ENCODE measurements at regions of chr9 and their contacts with region 1.

Region 1: GRCh38 chr9:5593904-5594303 is 35.0 kb upstream of the RIC1 start:
- DNase-seq: peak; percentile 57 to 76 (median 66)
- H3K4me3 ChIP-seq: no peak overlapping the region
- H3K4me3 Mint-ChIP-seq: no peak overlapping the region
- H3K27ac ChIP-seq: peak overlapping the region in 1 of 2 donors; percentile 21
- H3K27ac Mint-ChIP-seq: peak overlapping the region in 5 of 7 donors; percentile 21 to 81 (median 52)
- H3K4me1 ChIP-seq: peaks cover 14 to 15% of the 10 kb centered on the region in 2 donors
- H3K4me1 Mint-ChIP-seq: peaks cover 27% of the 10 kb centered on the region
- H3K27me3 ChIP-seq: peaks cover 0 to 4% of the 10 kb centered on the region in 2 donors
- H3K27me3 Mint-ChIP-seq: peaks cover 0 to 8% (median 7%) of the 10 kb centered on the region in 3 donors
- CTCF ChIP-seq: no peak

Region 2: GRCh38 chr9:4750023-4750673 is 843.8 kb before region 1 on chr9:
- intact Hi-C with region 1: loop called in 1 of 2 experiments (anchors 10 kb)
- DNase-seq: peak in 2 of 3 donors; percentile 27 to 55
- H3K4me3 ChIP-seq: no peak overlapping the region
- H3K4me3 Mint-ChIP-seq: no peak overlapping the region
- H3K27ac ChIP-seq: no peak overlapping the region
- H3K27ac Mint-ChIP-seq: no peak overlapping the region
- H3K4me1 ChIP-seq: peaks cover 0 to 10% of the 10 kb centered on the region in 2 donors
- H3K4me1 Mint-ChIP-seq: peaks cover 11% of the 10 kb centered on the region
- H3K27me3 ChIP-seq: no peaks in the 10 kb centered on the region
- H3K27me3 Mint-ChIP-seq: peaks cover 5 to 9% (median 5%) of the 10 kb centered on the region in 3 donors
- CTCF ChIP-seq: peak; percentile 76

Region 3: DNA sequence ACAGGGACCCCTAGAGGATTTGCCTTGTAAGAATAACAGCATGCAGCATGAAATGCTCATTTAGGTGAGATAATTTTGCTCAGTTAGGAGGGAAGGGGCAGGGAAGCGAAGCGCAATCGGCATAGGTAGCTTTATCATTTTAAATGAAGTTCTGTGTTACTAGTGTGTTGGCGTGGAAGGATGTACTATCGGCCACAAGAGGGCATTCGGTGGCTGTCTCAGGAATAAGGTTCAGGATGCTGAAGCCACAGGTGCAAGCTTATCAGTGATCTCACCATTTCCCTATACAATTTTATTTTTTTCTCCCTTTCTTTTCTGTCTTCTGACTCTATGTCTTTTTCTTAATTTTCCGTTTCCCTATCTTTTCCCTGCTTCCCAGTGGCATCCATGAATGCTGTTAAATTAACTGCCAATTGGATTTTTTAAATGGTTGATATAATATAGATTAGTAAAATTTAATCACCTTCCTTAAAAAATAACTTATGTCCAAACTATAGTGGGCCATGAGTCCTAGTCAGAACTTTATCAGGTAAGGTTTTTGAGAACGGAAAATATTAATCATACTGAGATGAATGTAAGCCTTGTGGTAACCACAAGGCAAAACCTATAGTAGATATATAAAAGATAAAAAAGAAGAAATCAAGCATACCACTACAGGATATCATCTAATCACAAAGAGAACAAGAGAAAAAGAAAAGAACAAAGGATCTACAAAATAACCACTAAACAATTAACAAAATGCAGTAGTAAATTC is 407.3 kb before region 1 on chr9:
- intact Hi-C with region 1: loop called (anchors 5 to 10 kb)
- DNase-seq: peak; percentile 0 to 31 (median 14)
- H3K4me3 ChIP-seq: no peak overlapping the region
- H3K4me3 Mint-ChIP-seq: no peak overlapping the region
- H3K27ac ChIP-seq: no peak overlapping the region
- H3K27ac Mint-ChIP-seq: no peak overlapping the region
- H3K4me1 ChIP-seq: no peaks in the 10 kb centered on the region
- H3K4me1 Mint-ChIP-seq: no peaks in the 10 kb centered on the region
- H3K27me3 ChIP-seq: no peaks in the 10 kb centered on the region
- H3K27me3 Mint-ChIP-seq: peaks cover 0 to 4% (median 0%) of the 10 kb centered on the region in 3 donors
- CTCF ChIP-seq: peak; percentile 64

Region 4: DNA sequence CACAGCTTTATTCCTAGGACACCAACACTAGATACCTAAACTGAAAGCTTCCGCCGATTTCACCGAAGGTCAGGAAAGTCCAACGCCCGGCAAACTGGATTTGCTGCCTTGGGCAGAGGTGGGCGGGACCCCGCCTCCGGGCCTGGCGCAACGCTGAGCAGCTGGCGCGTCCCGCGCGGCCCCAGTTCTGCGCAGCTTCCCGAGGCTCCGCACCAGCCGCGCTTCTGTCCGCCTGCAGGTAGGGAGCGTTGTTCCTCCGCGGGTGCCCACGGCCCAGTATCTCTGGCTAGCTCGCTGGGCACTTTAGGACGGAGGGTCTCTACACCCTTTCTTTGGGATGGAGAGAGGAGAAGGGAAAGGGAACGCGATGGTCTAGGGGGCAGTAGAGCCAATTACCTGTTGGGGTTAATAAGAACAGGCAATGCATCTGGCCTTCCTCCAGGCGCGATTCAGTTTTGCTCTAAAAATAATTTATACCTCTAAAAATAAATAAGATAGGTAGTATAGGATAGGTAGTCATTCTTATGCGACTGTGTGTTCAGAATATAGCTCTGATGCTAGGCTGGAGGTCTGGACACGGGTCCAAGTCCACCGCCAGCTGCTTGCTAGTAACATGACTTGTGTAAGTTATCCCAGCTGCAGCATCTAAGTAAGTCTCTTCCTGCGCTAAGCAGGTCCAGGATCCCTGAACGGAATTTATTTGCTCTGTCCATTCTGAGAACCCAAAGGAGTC is 143.4 kb before region 1 on chr9 and contains the start of gene CD274:
- intact Hi-C with region 1: loop called in 1 of 2 experiments (anchors 10 kb)
- DNase-seq: peak; percentile 65 to 91 (median 66)
- H3K4me3 ChIP-seq: peak within 1 kb of the TSS; percentile 76 to 94 (median 82)
- H3K4me3 Mint-ChIP-seq: peak within 1 kb of the TSS; percentile 81 to 93
- H3K27ac ChIP-seq: peak within 1 kb of the TSS; percentile 59 to 85
- H3K27ac Mint-ChIP-seq: peak within 1 kb of the TSS; percentile 87 to 93 (median 89)
- H3K4me1 ChIP-seq: peaks cover 39 to 47% of the 10 kb centered on the region in 2 donors
- H3K4me1 Mint-ChIP-seq: peaks cover 39% of the 10 kb centered on the region
- H3K27me3 ChIP-seq: no peaks in the 10 kb centered on the region
- H3K27me3 Mint-ChIP-seq: peaks cover 0 to 3% (median 0%) of the 10 kb centered on the region in 3 donors
- CTCF ChIP-seq: peak; percentile 62
- polyA plus RNA-seq, gene CD274: 0.24 to 0.84 TPM in 2 of 3 donors, not detected in the other

Measured in CD14-positive monocyte (primary cell).